ENCODE measurements at regions of chr22 and their contacts with region 1.

Region 1: GRCh38 chr22:24938741-24939341 is 7.7 kb downstream of the LHFPL7 start:
- DNase-seq: no peak
- H3K4me3 ChIP-seq: no peak overlapping the region
- H3K27me3 ChIP-seq: no peaks in the 10 kb centered on the region
- CTCF ChIP-seq: peak; percentile 76

Region 2: GRCh38 chr22:24926849-24927579 is 11.8 kb before region 1 on chr22:
- CTCF ChIA-PET with region 1: interaction called, 21 read pairs
- POLR2A ChIA-PET with region 1: no interaction called
- DNase-seq: no peak
- H3K4me3 ChIP-seq: no peak overlapping the region
- H3K27me3 ChIP-seq: no peaks in the 10 kb centered on the region; the same call in 1 of the 2 replicates
- CTCF ChIP-seq: no peak

Region 3: GRCh38 chr22:24951942-24952836 is 13.3 kb after region 1 on chr22 and contains the start of gene KIAA1671:
- CTCF ChIA-PET with region 1: interaction called, 14 read pairs
- POLR2A ChIA-PET with region 1: no interaction called
- DNase-seq: no peak
- H3K4me3 ChIP-seq: peak within 1 kb of the TSS; percentile 68
- H3K27me3 ChIP-seq: peaks cover 11% of the 10 kb centered on the region
- CTCF ChIP-seq: peak; percentile 96
- polyA plus RNA-seq, gene KIAA1671: 0.11 and 0.15 TPM in 2 replicates

Region 4: DNA sequence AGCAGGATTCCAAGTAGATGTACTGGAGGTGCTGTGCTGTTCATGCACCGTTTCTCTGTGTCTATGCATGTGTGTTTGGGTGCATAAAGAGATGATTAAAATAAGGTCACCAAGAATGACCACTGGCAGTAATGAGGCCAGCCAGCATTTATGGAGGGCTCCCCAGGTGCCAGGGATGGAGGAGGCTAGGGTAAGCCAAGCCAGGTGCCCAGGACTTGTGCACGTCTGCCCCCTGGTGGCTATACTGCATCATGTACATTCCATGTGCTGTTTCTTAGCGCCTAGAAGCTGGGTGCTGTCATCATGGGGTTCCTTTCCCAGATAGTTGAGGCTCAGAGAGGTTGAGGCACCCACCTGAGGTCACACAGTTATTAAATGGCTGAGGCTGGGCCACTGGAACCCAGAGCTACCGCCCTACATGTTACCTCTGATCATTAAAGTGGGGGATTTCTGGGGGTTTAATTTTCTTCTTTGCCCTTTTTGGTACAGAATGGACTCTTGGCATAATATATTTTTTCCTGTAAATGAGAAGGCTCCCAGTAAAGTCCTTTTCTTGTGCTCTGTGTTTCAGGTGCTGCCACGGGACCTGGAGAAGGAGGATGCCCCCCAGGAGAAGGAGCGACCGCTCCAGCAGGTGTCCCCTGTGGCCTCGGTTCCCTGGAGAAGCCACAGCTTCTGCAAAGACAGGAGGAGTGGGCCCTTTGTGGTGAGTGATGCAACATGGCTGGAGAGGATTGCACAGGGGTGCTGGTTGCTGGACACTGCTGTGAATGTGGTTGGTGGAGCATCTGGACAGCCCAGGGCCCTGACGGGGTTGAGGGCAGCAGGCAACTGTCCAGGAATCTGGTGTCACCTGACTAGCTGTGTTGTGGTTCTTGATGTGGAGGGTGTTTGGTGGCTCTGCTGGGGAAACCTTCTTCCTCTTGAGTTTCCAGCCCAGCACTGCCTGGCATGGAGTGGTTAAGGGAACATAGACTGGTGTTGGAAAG is 110.1 kb after region 1 on chr22:
- CTCF ChIA-PET with region 1: interaction called, 31 read pairs
- POLR2A ChIA-PET with region 1: no interaction called
- DNase-seq: no peak
- H3K4me3 ChIP-seq: no peak overlapping the region
- H3K27me3 ChIP-seq: no peaks in the 10 kb centered on the region
- CTCF ChIP-seq: peak; percentile 77

Region 5: GRCh38 chr22:25057013-25057881 is 118.4 kb after region 1 on chr22:
- CTCF ChIA-PET with region 1: interaction called, 13 read pairs
- POLR2A ChIA-PET with region 1: no interaction called
- DNase-seq: no peak
- H3K4me3 ChIP-seq: no peak overlapping the region
- H3K27me3 ChIP-seq: no peaks in the 10 kb centered on the region
- CTCF ChIP-seq: peak; percentile 88